ENCODE measurements at regions of chr14 and their contacts with region 1.

Region 1: DNA sequence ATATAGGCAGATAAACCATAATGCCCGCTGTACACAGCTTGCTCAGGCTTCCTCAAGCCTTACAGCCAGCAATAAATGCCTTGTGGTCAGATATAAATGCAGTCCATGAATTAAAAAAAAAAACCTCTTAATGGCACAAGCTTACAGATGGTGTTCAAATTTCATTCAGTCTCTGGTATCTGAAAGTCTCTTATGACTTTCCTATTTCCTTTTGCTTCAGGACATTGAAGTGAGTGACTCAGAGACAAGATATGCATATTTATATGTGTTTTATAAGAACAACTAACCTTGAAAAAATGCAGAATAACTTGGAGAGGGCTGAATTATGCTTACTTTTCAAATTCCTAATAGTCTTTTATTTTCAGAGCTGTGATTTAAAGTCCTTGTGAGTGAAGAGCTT is 426.9 kb upstream of the MIS18BP1 start:
- DNase-seq: peak; percentile 95
- ATAC-seq: peak; percentile 94
- H3K4me3 ChIP-seq: peak overlapping the region; percentile 17; the same call in 1 of the 2 replicates
- H3K27ac ChIP-seq: peak overlapping the region; percentile 40
- H3K4me1 ChIP-seq: peaks cover 37% of the 10 kb centered on the region
- H3K27me3 ChIP-seq: no peaks in the 10 kb centered on the region
- CTCF ChIP-seq: no peak

Region 2: GRCh38 chr14:45705940-45706534 is 26.2 kb after region 1 on chr14:
- CTCF ChIA-PET with region 1: no interaction called
- POLR2A ChIA-PET with region 1: no interaction called
- intact Hi-C with region 1: loop called (anchors 1 kb)
- DNase-seq: no peak
- ATAC-seq: peak; percentile 91
- H3K4me3 ChIP-seq: no peak overlapping the region
- H3K27ac ChIP-seq: no peak overlapping the region
- H3K4me1 ChIP-seq: 0 out of 2 replicates have a peak, but pooled peaks cover 3% of the 10 kb centered on the region
- H3K27me3 ChIP-seq: peaks cover 41% of the 10 kb centered on the region
- CTCF ChIP-seq: no peak

Region 3: DNA sequence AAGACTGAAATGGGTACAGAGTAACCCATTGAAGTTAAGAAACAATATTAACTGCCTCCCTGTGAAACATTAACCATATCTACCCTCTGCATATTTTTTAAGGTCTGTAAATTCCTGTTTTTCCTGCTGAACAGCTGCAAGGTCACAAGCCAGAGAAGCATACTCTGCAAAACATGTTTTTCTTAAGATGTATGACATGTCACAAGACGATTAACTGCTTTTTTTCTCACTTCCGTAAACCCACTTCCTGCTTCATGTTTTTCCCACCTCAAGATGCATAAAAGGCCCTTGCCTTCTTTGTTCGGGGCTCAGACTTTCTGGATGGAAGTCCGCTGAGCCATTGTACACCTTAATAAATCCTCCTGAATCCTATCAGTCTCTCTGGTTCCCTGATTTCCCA is 77.8 kb after region 1 on chr14:
- CTCF ChIA-PET with region 1: no interaction called
- POLR2A ChIA-PET with region 1: no interaction called
- intact Hi-C with region 1: no loop called
- DNase-seq: no peak
- ATAC-seq: no peak
- H3K4me3 ChIP-seq: no peak overlapping the region
- H3K27ac ChIP-seq: no peak overlapping the region
- H3K4me1 ChIP-seq: no peaks in the 10 kb centered on the region
- H3K27me3 ChIP-seq: no peaks in the 10 kb centered on the region
- CTCF ChIP-seq: no peak

Region 4: DNA sequence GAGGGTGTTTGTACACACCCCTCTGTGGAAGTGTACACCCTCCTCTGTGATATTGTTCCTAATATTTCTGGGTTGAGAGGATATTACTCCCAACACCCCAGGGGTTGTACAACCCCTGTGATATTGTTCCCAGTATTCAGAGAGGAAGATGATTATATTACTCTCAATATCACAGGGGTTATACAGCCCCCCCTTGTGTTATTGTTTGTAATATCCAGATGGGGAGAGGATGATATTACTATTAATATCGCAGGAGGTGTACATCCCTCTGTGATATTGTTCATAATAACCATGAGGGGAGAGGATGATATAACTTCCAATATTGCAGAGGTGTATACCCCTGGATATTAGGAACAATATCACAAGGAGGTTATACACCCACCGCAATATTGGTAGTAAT is 139.3 kb after region 1 on chr14:
- CTCF ChIA-PET with region 1: no interaction called
- POLR2A ChIA-PET with region 1: no interaction called
- intact Hi-C with region 1: loop called (anchors 2 kb)
- DNase-seq: peak; percentile 13
- ATAC-seq: peak; percentile 52
- H3K4me3 ChIP-seq: no peak overlapping the region
- H3K27ac ChIP-seq: no peak overlapping the region
- H3K4me1 ChIP-seq: no peaks in the 10 kb centered on the region
- H3K27me3 ChIP-seq: peaks cover 93% of the 10 kb centered on the region
- CTCF ChIP-seq: peak; percentile 42

Region 5: GRCh38 chr14:45940307-45940706 is 260.5 kb after region 1 on chr14:
- CTCF ChIA-PET with region 1: no interaction called
- POLR2A ChIA-PET with region 1: no interaction called
- intact Hi-C with region 1: loop called (anchors 1 kb)
- DNase-seq: peak; percentile 43
- ATAC-seq: 0 out of 2 replicates have a peak, but pooled peaks have one; percentile 37
- H3K4me3 ChIP-seq: no peak overlapping the region
- H3K27ac ChIP-seq: no peak overlapping the region
- H3K4me1 ChIP-seq: no peaks in the 10 kb centered on the region
- H3K27me3 ChIP-seq: peaks cover 33% of the 10 kb centered on the region
- CTCF ChIP-seq: peak; percentile 64

Measured in PC-3 (cell line).